ENCODE measurements at regions of chr20 and their contacts with region 1.

Region 1: DNA sequence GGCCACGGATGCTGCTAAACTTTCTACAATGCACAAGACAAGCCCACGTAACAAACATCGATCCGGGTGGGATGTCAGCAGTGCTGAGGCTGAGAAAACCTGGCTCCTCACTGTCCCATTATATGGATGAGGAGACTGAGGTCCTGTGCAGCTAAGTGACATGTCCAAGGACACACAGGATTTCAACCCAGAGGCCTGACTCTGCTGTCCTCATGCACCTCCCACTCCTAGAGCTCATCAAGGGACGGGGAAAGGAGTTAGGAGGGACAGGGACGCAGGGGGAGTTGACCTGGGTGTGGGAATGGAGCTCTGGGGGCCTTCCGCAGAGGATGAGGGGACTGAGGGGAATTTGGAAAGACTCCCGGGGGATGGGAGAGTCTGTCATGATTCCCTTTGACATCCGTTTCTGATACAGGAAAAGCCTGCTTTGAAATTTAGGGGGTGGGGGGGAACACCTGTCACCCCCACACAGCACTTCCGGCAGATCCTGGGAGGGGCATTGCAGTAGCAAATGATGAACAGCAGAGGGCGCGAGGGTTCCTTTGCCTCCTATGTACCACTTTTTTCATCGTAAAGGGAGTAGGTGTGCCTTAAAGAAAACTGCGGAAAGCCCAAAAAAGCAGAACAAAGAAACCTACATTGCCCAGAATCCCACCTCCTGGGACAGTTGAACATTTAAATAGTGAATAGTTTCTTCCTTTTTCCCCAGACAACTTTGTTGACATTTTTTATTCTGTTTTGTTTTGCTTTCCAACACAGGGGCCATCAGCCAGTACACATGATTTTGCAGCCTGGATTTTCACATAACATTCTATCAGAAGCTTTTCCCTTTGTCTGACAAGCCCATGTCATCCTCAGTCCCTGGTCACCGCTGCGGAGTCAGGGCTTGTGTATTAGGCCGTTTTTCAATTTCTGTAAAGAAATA is 48.6 kb downstream of the SLC2A10 start:
- DNase-seq: peak; percentile 30
- H3K4me3 ChIP-seq: no peak overlapping the region
- H3K27ac ChIP-seq: no peak overlapping the region
- H3K4me1 ChIP-seq: peaks cover 4% of the 10 kb centered on the region
- H3K27me3 ChIP-seq: peaks cover 28% of the 10 kb centered on the region
- CTCF ChIP-seq: peak; percentile 94

Region 2: DNA sequence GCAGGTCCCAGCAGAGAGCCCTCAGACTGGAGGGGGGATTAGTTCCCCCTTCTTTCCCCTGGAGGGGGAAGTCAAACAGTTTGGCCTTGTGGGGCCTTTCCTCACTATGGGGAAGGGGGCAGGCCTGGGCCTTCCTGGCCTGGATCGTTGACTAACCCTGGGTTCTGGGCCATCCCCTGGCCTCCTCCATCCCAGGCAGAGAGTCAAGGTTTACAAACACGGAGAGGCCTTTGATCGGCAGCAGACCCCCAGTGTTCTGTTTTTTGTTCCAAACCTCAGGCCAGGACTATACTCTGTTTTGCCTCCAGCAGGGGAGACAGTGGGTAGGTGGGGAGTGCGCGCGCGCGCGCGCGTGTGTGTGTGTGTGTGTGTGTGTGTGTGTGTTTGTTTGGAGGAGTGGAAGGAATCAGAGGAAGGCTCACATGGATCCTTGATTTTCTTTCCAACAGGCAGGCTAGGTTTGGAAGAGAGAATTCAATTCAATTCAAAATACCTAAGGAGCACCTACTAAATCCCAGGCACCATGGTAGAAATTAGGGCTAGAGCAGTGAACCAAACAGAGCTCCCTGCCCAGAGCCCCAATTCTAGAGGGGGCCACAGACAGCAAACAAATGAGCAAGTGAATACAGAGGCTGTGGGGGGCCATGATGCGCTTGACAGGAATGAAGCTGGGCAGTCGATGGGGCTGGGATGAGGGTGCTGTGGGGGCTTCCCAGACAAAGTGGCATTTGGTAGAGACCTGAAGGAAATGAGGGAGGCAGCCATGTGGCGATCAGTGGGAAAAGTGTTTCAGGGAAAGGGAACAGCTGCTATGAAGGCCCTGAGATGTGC is 83.5 kb before region 1 on chr20:
- intact Hi-C with region 1: no loop called
- DNase-seq: no peak
- H3K4me3 ChIP-seq: no peak overlapping the region
- H3K27ac ChIP-seq: no peak overlapping the region
- H3K4me1 ChIP-seq: no peaks in the 10 kb centered on the region
- H3K27me3 ChIP-seq: no peaks in the 10 kb centered on the region
- CTCF ChIP-seq: no peak

Region 3: GRCh38 chr20:47150403-47151152 is 392.6 kb after region 1 on chr20:
- intact Hi-C with region 1: loop called (anchors 10 kb)
- DNase-seq: peak; percentile 46
- H3K4me3 ChIP-seq: no peak overlapping the region
- H3K27ac ChIP-seq: no peak overlapping the region
- H3K4me1 ChIP-seq: no peaks in the 10 kb centered on the region
- H3K27me3 ChIP-seq: peaks cover 45% of the 10 kb centered on the region
- CTCF ChIP-seq: peak; percentile 68

Measured in left ventricle myocardium inferior (tissue), 1 donor.